Activated naive CD4-positive, alpha-beta T cell treated with anti-CD3 and anti-CD28 coated beads for 36 hours (primary cell): ENCODE measurements at regions of chrX and their contacts with region 1.

Region 1: GRCh38 chrX:83630662-83631061 is 122.6 kb downstream of the POU3F4 start:
- DNase-seq: no peak
- H3K4me3 Mint-ChIP-seq: no peak overlapping the region
- H3K27ac Mint-ChIP-seq: no peak overlapping the region
- H3K4me1 Mint-ChIP-seq: peaks cover 6% of the 10 kb centered on the region
- H3K27me3 Mint-ChIP-seq: peaks cover 4% of the 10 kb centered on the region

Region 2: GRCh38 chrX:81957900-81958545 is 1672.6 kb before region 1 on chrX:
- CTCF ChIA-PET with region 1: no interaction called
- intact Hi-C with region 1: loop called (anchors 2 kb)
- DNase-seq: peak; percentile 8
- H3K4me3 Mint-ChIP-seq: no peak overlapping the region
- H3K27ac Mint-ChIP-seq: no peak overlapping the region
- H3K4me1 Mint-ChIP-seq: no peaks in the 10 kb centered on the region
- H3K27me3 Mint-ChIP-seq: no peaks in the 10 kb centered on the region

Region 3: GRCh38 chrX:83008415-83008814 is 622.2 kb before region 1 on chrX:
- CTCF ChIA-PET with region 1: no interaction called
- intact Hi-C with region 1: loop called (anchors 1 kb)
- DNase-seq: no peak
- H3K4me3 Mint-ChIP-seq: no peak overlapping the region
- H3K27ac Mint-ChIP-seq: no peak overlapping the region
- H3K4me1 Mint-ChIP-seq: no peaks in the 10 kb centered on the region
- H3K27me3 Mint-ChIP-seq: no peaks in the 10 kb centered on the region

Region 4: GRCh38 chrX:83416273-83416672 is 214.4 kb before region 1 on chrX:
- CTCF ChIA-PET with region 1: no interaction called
- intact Hi-C with region 1: no loop called
- DNase-seq: no peak
- H3K4me3 Mint-ChIP-seq: no peak overlapping the region
- H3K27ac Mint-ChIP-seq: no peak overlapping the region
- H3K4me1 Mint-ChIP-seq: no peaks in the 10 kb centered on the region
- H3K27me3 Mint-ChIP-seq: no peaks in the 10 kb centered on the region

Region 5: GRCh38 chrX:83469551-83469950 is 161.1 kb before region 1 on chrX:
- CTCF ChIA-PET with region 1: interaction called, 3 read pairs
- intact Hi-C with region 1: loop called (anchors 1 kb)
- DNase-seq: peak; percentile 9
- H3K4me3 Mint-ChIP-seq: no peak overlapping the region
- H3K27ac Mint-ChIP-seq: no peak overlapping the region
- H3K4me1 Mint-ChIP-seq: no peaks in the 10 kb centered on the region
- H3K27me3 Mint-ChIP-seq: no peaks in the 10 kb centered on the region

Region 6: GRCh38 chrX:83588409-83588808 is 42.3 kb before region 1 on chrX:
- CTCF ChIA-PET with region 1: no interaction called
- intact Hi-C with region 1: no loop called
- DNase-seq: no peak
- H3K4me3 Mint-ChIP-seq: no peak overlapping the region
- H3K27ac Mint-ChIP-seq: no peak overlapping the region
- H3K4me1 Mint-ChIP-seq: no peaks in the 10 kb centered on the region
- H3K27me3 Mint-ChIP-seq: no peaks in the 10 kb centered on the region

Region 7: GRCh38 chrX:84133023-84133422 is 502.4 kb after region 1 on chrX:
- CTCF ChIA-PET with region 1: no interaction called
- intact Hi-C with region 1: no loop called
- DNase-seq: no peak
- H3K4me3 Mint-ChIP-seq: no peak overlapping the region
- H3K27ac Mint-ChIP-seq: no peak overlapping the region
- H3K4me1 Mint-ChIP-seq: no peaks in the 10 kb centered on the region
- H3K27me3 Mint-ChIP-seq: no peaks in the 10 kb centered on the region

Region 8: DNA sequence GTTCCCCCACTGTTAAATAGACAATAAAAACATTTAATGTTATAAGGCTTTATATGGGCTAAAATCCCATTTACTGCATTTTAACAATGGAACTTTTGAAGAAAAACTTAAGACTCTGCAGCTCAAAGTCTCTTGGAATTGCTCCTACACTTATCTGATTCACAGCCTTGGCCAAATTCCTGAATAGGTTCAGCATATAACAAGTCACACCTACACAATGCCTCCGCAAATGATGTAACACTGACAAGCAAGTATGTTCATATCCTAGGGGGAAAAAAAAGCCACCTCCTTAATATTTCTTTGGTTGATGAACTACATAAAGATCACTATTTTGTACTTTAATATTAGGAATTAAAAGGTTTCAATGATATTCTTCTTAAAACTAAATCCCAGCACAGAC is 522.9 kb after region 1 on chrX:
- CTCF ChIA-PET with region 1: no interaction called
- intact Hi-C with region 1: no loop called
- DNase-seq: no peak
- H3K4me3 Mint-ChIP-seq: no peak overlapping the region
- H3K27ac Mint-ChIP-seq: no peak overlapping the region
- H3K4me1 Mint-ChIP-seq: no peaks in the 10 kb centered on the region
- H3K27me3 Mint-ChIP-seq: no peaks in the 10 kb centered on the region